Activated T-helper 2 cell treated with anti-CD3 and anti-CD28 coated beads, Interferon-gamma antibody, Interleukin-2, Interleukin-4, amounts not matched to agents 10 μg/mL and 5 μg/mL and 100 μg/mL, durations not matched to agents 14 hours and 24 hours and 36 hours (primary cell): ENCODE measurements at regions of chr3 and their contacts with region 1.

Region 1: DNA sequence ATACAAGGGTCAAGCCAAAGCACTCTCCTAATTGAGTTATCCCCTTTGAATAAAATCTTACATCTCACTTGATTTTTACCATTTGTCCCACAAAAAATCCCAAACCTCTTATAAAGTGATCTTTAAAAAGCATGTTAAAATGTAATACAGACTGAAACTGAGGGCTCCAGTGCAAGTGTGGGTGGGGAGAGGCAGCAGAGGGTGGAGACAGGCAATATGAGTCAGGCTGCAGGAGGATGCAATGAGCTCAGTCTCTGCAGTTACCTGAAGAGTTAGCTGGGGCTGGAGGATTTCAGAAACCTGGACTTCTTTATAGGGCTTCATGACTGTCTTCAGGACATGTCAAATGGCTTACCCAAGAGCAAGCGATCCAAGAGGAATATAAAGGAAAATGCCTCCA is 14.2 kb upstream of the COLQ start:
- DNase-seq: peak; percentile 47
- H3K4me3 Mint-ChIP-seq: peak overlapping the region; percentile 42
- H3K27ac Mint-ChIP-seq: peak overlapping the region; percentile 82
- H3K4me1 Mint-ChIP-seq: peaks cover 51% of the 10 kb centered on the region
- H3K27me3 Mint-ChIP-seq: no peaks in the 10 kb centered on the region

Region 2: DNA sequence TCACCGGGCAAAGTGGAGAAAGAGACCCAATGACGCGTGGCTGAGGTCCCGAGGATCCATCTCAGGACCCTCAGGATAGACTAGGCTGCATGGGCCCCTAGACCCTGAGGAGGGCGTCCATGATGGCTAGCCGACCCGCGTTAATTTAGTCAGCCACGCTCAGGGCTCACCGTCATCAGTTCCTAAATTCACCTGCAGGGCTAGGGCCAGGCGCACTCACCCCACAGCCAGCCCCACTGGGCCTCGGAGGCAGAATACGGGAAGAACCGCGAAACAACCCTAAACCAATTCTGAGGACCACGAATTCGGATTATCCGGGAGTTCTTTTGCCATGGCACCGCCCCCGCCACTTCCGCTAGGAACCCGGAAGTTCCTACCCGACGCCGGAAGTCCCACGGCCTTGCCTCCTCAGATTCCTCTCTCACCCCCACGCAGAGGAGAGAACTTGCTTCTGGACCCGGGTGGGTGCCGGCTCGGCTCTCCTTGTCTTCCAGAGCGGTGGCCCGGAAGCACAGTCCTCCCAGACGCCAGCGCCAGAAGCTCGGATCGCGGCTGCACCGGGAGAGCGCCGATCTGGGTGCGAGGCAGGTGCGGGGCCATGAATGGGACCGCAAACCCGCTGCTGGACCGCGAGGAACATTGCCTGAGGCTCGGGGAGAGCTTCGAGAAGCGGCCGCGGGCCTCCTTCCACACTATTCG is 108.4 kb before region 1 on chr3 and contains the starts of genes EAF1 and METTL6:
- intact Hi-C with region 1: loop called (anchors 2 kb)
- DNase-seq: peak; percentile 79
- H3K4me3 Mint-ChIP-seq: peak within 1 kb of the TSS; percentile 95
- H3K27ac Mint-ChIP-seq: peak within 1 kb of the TSS; percentile 89
- H3K4me1 Mint-ChIP-seq: peaks cover 41% of the 10 kb centered on the region
- H3K27me3 Mint-ChIP-seq: no peaks in the 10 kb centered on the region
- total RNA-seq, gene EAF1: 23.9 and 25.9 TPM in 2 replicates
- total RNA-seq, gene METTL6: 16.1 and 16.5 TPM in 2 replicates

Region 3: GRCh38 chr3:15500107-15500724 is 35.5 kb before region 1 on chr3:
- intact Hi-C with region 1: loop called (anchors 1 kb)
- DNase-seq: no peak
- H3K4me3 Mint-ChIP-seq: no peak overlapping the region
- H3K27ac Mint-ChIP-seq: peak overlapping the region; percentile 43
- H3K4me1 Mint-ChIP-seq: peaks cover 25% of the 10 kb centered on the region
- H3K27me3 Mint-ChIP-seq: no peaks in the 10 kb centered on the region